Ascending aorta (tissue), 2 donors: ENCODE measurements at regions of chr1 and their contacts with region 1.

Region 1: GRCh38 chr1:171372456-171373084 is 58.6 kb downstream of the FMO4 start:
- DNase-seq: no peak
- H3K4me3 ChIP-seq: no peak overlapping the region
- H3K27ac ChIP-seq: peak overlapping the region; percentile 91 to 95
- H3K4me1 ChIP-seq: peaks cover 10 to 27% of the 10 kb centered on the region in 2 donors
- H3K27me3 ChIP-seq: no peaks in the 10 kb centered on the region
- CTCF ChIP-seq: no peak

Region 2: DNA sequence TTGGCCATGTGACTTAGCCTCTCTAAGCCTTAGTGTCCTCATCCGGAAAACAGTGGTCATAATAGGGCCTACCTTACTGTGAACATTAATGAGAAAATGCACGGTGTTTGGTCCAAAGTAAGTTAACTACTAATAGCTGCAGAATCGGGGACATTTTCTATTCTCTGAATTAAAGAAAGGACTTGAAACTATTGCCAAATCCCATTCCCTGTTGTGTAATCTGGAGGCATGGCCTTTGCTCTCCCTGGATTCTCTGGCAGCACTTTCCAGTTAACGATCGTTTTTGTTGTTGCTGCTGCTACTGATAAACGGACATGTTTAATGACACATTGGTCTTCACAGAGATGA is 28.1 kb before region 1 on chr1:
- intact Hi-C with region 1: loop called (anchors 1 kb)
- DNase-seq: peak in 1 of 2 donors; percentile 68
- H3K4me3 ChIP-seq: no peak overlapping the region
- H3K27ac ChIP-seq: peak overlapping the region; percentile 48 to 62
- H3K4me1 ChIP-seq: peaks cover 0 to 19% of the 10 kb centered on the region in 2 donors
- H3K27me3 ChIP-seq: no peaks in the 10 kb centered on the region
- CTCF ChIP-seq: no peak

Region 3: DNA sequence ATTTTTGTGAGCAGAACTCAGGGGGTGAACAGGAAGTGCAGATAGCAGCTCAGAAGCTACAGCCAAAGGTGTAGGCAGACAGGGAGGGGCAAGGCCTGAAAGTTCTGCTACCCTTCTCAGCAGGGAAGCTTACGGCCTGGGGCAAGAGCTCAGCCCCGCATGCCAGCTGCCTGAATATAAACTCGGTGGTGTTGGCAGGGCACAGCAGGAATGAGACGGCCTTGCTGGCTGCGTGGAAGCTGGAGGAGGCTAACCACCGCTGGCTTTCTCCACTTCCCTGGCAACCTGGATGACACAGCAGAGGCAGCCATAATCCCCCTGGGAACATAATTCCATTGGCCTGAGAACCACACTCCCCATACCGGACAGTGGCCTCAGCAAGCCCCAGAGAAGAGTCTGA is 30.8 kb after region 1 on chr1:
- intact Hi-C with region 1: loop called (anchors 2 kb)
- DNase-seq: peak in 1 of 2 donors; percentile 79
- H3K4me3 ChIP-seq: no peak overlapping the region
- H3K27ac ChIP-seq: peak overlapping the region; percentile 64 to 78
- H3K4me1 ChIP-seq: peaks cover 0 to 11% of the 10 kb centered on the region in 2 donors
- H3K27me3 ChIP-seq: no peaks in the 10 kb centered on the region
- CTCF ChIP-seq: no peak

Region 4: DNA sequence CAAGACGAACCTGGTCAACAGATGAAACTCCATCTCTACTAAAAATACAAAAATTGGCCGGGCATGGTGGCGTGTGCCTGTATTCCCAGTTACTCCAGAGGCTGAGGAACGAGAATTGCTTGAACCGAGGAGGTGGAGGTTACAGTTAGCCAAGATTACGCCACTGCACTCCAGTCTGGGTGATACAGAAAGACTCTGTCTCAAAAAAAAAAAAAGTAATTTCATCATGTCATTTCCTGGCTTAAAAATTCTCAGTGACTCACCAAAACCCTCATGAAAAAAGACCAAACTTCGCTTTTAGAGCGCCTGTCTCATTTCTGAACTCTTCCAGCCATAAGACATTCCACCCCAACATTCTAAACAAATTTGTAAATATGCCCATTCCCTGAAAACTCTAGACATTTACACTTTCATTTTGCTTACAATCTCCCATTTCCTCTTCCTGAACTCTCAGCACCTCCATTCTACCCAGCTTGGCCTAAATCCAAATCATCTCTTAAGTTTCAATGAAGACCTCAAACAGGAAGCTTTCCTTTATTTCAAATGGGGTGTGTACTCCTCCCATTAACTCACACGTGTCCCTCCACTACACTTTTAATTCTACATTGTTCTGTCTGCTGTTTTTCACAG is 62.3 kb after region 1 on chr1:
- intact Hi-C with region 1: loop called (anchors 2 kb)
- DNase-seq: peak; percentile 16 to 90
- H3K4me3 ChIP-seq: peak overlapping the region; percentile 5 to 35
- H3K27ac ChIP-seq: peak overlapping the region; percentile 87
- H3K4me1 ChIP-seq: peaks cover 4 to 18% of the 10 kb centered on the region in 2 donors
- H3K27me3 ChIP-seq: no peaks in the 10 kb centered on the region
- CTCF ChIP-seq: no peak

Region 5: GRCh38 chr1:171485375-171486047 is 112.9 kb after region 1 on chr1 and contains the start of gene PRRC2C:
- intact Hi-C with region 1: loop called (anchors 2 kb)
- DNase-seq: peak; percentile 88 to 99
- H3K4me3 ChIP-seq: peak within 1 kb of the TSS; percentile 75 to 91
- H3K27ac ChIP-seq: peak within 1 kb of the TSS; percentile 97 to 100
- H3K4me1 ChIP-seq: peaks cover 3 to 19% of the 10 kb centered on the region in 2 donors
- H3K27me3 ChIP-seq: no peaks in the 10 kb centered on the region
- CTCF ChIP-seq: peak in 2 of 3 experiments; percentile 83 to 89
- total RNA-seq, gene PRRC2C: 46.3 TPM